ENCODE measurements at regions of chr2 and their contacts with region 1.

Region 1: DNA sequence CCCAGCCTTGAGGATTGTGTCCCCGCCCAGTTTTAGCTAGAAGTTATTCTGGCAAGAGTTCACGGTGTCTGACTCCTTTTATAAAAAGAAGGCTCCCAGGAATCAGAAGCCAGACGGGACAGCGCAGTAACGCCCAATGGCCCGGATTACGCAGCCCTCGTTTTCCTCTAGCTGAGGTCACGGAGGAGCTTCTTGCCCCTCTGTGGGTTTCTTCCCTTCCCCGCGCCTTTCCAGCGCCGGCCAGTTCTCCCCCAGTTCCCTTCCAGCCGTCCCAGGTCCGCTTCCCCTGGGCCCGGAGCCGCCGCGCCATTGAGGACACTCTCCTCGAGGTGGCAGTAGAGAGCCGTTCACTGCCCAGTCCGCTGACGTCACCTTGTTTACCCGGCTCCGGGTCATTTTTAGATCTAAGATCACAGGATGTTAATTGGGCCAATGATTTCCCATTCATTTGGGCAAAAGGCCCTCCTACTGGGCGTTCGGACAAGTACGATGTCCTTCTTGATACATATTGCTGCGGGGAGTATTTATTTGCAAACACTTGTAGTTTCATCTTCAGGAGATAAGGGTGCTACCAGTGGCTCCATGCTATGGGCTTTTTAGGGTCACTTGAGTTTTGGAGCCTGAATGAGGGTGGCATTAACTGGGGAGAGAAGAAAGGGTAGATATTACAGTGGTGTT is 81.5 kb upstream of the PPM1B start:
- DNase-seq: peak; percentile 61
- ATAC-seq: peak; percentile 99
- H3K4me3 ChIP-seq: peak overlapping the region; percentile 44
- H3K27ac ChIP-seq: no peak overlapping the region
- H3K4me1 ChIP-seq: peaks cover 2% of the 10 kb centered on the region; the same call in 1 of the 2 replicates
- H3K27me3 ChIP-seq: peaks cover 4% of the 10 kb centered on the region
- CTCF ChIP-seq: peak; percentile 96
- POLR2A ChIP-seq: no peak
- RAD21 ChIP-seq: peak; percentile 93

Region 2: DNA sequence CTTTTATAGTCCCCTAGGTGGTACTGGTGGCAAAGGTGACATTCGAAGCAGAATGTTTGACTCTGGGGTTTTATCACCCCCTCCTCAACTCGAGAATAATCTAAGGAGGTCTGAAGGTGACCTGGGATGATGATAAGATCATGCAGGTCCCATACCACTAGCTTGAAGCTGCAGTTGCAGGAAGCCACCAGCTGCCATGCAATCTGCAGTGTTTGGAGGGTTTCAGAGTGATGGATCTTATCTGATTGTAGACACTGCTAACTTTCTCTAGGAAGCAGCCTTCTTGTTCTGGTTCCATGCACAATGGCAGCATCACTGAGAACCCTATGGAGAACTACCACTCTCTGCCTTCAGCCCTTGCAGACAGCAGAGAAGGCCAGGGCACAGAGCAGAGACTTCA is 31.9 kb before region 1 on chr2:
- CTCF ChIA-PET with region 1: no interaction called
- POLR2A ChIA-PET with region 1: no interaction called
- dilution Hi-C with region 1: no loop called
- in situ Hi-C with region 1: no loop called
- intact Hi-C with region 1: loop called (anchors 1 kb)
- DNase-seq: no peak
- ATAC-seq: no peak
- H3K4me3 ChIP-seq: no peak overlapping the region
- H3K27ac ChIP-seq: no peak overlapping the region
- H3K4me1 ChIP-seq: no peaks in the 10 kb centered on the region
- H3K27me3 ChIP-seq: peaks cover 20% of the 10 kb centered on the region
- CTCF ChIP-seq: no peak
- POLR2A ChIP-seq: no peak
- RAD21 ChIP-seq: no peak

Region 3: DNA sequence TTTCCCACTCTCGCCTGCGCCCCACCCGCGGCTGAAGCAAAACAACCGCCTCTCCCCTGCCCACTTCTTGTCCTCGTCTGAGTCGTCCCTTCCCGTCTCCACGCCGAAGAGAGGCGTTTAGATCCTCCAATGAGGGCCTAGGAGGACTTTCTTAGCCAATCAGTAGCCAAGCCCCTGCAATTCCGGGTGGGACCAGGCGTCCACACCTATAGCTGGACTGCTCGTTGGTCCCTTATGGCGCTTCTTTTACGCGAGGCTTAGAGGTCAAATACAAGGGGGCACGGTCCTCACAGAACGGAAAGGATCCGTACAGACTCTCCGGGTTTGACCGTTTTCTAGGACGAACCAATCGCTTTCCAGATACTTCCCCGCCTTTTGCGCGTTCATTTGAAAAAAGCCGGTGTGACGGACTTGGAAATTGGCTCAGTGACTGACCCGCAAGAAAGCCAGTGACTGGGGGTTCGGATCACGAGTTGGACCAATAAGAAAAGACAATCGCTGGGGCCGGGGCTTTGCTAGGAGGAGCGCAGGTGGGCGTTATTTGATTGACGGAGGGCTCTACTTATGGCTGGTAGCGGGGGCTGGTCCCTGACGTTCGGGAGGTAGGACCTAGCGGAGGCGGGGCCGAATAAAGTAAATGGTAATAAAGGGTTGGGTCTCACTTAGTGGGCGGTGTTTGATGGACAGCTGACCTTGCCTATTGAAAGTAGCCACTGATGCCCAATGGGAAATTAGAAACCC is 80.9 kb after region 1 on chr2:
- CTCF ChIA-PET with region 1: interaction called, 4 read pairs
- POLR2A ChIA-PET with region 1: interaction called, 7 read pairs
- dilution Hi-C with region 1: no loop called
- in situ Hi-C with region 1: no loop called
- intact Hi-C with region 1: loop called (anchors 1 kb)
- DNase-seq: peak; percentile 100
- ATAC-seq: peak; percentile 84
- H3K4me3 ChIP-seq: peak overlapping the region; percentile 69
- H3K27ac ChIP-seq: peak overlapping the region; percentile 76
- H3K4me1 ChIP-seq: peaks cover 2% of the 10 kb centered on the region; the same call in 1 of the 2 replicates
- H3K27me3 ChIP-seq: no peaks in the 10 kb centered on the region
- CTCF ChIP-seq: no peak
- POLR2A ChIP-seq: peak; percentile 51; the same call in 1 of the 2 replicates
- RAD21 ChIP-seq: no peak

Region 4: DNA sequence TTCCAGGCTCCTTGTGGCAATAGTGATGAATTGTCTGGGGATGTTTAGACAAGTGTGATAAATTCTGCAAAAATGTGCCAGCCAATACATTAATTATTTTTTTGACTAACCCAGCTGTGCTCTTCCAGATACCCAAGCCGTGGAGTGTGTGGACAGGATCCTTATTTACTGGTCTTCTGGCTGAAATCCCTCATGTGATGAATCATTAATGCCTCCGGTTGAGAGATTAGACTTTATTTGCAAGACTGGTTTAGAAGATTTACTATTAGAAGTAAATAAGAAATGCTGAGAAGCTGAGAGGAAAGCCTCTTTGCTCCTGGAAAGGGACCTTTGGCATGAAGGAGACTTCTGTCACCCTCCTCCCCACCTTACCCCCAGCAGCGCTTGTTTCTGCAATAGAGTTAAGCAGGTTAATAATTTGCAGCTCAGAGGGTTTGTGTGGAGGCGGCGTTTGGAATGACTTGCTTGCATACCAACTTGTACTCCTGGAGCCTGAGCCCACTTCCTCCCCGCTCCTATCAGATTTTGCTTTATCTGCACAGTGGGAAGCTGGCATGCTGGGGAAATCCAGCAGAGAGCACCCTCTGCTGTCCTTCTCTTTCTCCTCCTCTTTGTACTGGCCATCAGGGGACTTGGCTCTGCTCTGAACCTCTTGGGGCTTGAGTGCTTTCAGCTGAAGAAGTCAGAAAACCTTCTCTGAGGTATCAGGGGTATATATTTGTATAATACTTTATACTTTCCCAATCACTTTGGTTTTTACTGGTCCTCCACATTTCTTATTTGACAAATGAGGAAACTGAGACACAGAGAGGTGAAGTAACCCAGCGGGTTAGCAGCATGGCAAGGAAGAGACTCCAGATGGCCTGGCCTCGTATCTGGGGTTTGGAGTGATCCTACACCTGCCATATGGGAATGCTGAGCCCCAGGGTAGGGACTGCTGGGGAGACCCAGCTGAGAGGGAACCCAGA is 204.4 kb after region 1 on chr2:
- CTCF ChIA-PET with region 1: interaction called, 4 read pairs
- POLR2A ChIA-PET with region 1: no interaction called
- dilution Hi-C with region 1: no loop called
- in situ Hi-C with region 1: loop called (anchors 25 kb)
- intact Hi-C with region 1: loop called (anchors 1 kb)
- DNase-seq: peak; percentile 75
- ATAC-seq: peak; percentile 95
- H3K4me3 ChIP-seq: no peak overlapping the region
- H3K27ac ChIP-seq: no peak overlapping the region
- H3K4me1 ChIP-seq: peaks cover 7% of the 10 kb centered on the region
- H3K27me3 ChIP-seq: peaks cover 20% of the 10 kb centered on the region
- CTCF ChIP-seq: peak; percentile 74
- POLR2A ChIP-seq: no peak
- RAD21 ChIP-seq: peak; percentile 79

Region 5: GRCh38 chr2:44342854-44343253 is 255.7 kb after region 1 on chr2:
- CTCF ChIA-PET with region 1: no interaction called
- POLR2A ChIA-PET with region 1: interaction called, 14 read pairs
- dilution Hi-C with region 1: no loop called
- in situ Hi-C with region 1: no loop called
- intact Hi-C with region 1: no loop called
- DNase-seq: peak; percentile 7
- ATAC-seq: 0 out of 2 replicates have a peak, but pooled peaks have one; percentile 21
- H3K4me3 ChIP-seq: no peak overlapping the region
- H3K27ac ChIP-seq: no peak overlapping the region
- H3K4me1 ChIP-seq: peaks cover 3% of the 10 kb centered on the region; the same call in 1 of the 2 replicates
- H3K27me3 ChIP-seq: no peaks in the 10 kb centered on the region
- CTCF ChIP-seq: no peak
- POLR2A ChIP-seq: no peak
- RAD21 ChIP-seq: peak; percentile 20; the same call in 1 of the 2 replicates

Region 6: DNA sequence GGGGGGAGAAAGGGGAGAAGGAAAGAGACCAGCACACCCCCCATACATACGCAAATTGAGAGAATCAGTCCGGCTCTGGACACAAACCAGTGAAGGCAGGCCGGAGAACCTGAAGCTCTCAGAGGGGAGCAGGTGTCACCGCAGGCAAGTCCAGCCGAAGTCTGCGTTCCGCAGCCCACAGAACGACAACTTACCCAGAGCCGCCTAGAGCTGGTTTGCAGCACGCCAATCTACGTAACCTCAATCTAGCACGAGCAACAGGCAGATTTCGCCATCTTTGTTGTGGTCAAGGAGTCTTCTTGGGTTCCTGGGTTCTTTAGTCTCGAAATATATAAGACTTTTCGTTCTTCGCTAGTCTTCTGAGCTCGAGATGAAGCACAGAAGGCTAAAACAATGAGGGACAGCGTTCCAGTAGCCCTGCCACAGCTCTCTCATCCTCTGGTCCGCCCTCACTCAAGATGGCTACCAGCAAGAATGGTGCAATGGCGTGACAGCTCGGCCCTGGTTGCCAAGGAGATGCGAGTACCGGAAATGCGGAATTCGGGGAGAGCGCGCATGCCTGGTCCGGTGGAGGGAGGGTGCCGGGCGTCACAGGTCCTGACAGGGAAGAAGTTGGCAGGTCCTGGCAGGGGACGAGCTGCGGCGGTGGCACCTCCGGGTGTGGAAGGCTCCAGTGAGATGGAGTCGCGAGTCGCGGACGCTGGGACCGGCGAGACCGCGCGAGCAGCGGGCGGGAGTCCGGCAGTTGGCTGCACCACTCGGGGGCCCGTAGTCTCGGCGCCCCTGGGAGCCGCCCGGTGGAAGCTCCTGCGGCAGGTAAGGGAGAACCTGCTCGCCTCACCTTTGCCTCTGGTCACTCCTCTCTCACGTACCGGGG is 274.4 kb after region 1 on chr2 and contains the starts of genes CAMKMT and PREPL:
- CTCF ChIA-PET with region 1: no interaction called
- POLR2A ChIA-PET with region 1: no interaction called
- dilution Hi-C with region 1: no loop called
- in situ Hi-C with region 1: no loop called
- intact Hi-C with region 1: loop called (anchors 10 kb)
- DNase-seq: peak; percentile 97
- ATAC-seq: peak; percentile 92
- H3K4me3 ChIP-seq: peak within 1 kb of the TSS; percentile 58
- H3K27ac ChIP-seq: peak within 1 kb of the TSS; percentile 98
- H3K4me1 ChIP-seq: no peaks in the 10 kb centered on the region
- H3K27me3 ChIP-seq: no peaks in the 10 kb centered on the region
- CTCF ChIP-seq: no peak
- POLR2A ChIP-seq: peak; percentile 86
- RAD21 ChIP-seq: no peak
- total RNA-seq, gene CAMKMT: 6.7 and 6.8 TPM in 2 replicates
- total RNA-seq, gene PREPL: 39.6 and 59.2 TPM in 2 replicates

Region 7: DNA sequence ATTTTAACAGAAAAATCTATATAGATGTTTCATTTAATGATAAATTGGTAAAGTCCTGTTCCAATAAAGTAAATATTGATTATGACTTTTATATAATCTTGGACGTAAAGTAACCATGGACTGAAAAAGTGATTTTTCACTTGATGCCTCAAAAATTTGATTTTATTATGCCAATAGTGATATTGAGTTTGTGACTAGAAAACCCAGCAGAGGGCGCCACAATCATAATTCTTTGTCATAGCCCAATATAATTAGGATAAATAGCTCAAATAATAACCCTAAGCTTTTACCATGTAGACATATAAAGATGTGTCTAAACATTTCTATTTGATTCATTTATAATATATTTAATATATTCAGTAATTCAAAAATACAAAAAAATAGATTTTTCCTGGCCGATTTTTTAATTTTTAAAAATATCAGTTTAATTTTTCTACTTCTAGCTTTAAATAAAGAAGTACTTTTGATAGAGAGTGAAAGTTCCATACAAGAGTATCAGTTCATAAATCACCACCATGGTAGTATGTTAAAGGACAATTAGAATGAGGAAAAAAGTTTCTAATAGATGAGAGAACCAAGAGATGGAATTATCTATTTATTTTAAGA is 305.3 kb after region 1 on chr2:
- CTCF ChIA-PET with region 1: no interaction called
- POLR2A ChIA-PET with region 1: no interaction called
- dilution Hi-C with region 1: no loop called
- in situ Hi-C with region 1: no loop called
- intact Hi-C with region 1: loop called (anchors 5 kb)
- DNase-seq: peak; percentile 21
- ATAC-seq: peak; percentile 37; the same call in 1 of the 2 replicates
- H3K4me3 ChIP-seq: no peak overlapping the region
- H3K27ac ChIP-seq: no peak overlapping the region
- H3K4me1 ChIP-seq: no peaks in the 10 kb centered on the region
- H3K27me3 ChIP-seq: no peaks in the 10 kb centered on the region
- CTCF ChIP-seq: peak; percentile 65
- POLR2A ChIP-seq: no peak
- RAD21 ChIP-seq: peak; percentile 55

Region 8: GRCh38 chr2:44596537-44597320 is 509.6 kb after region 1 on chr2:
- CTCF ChIA-PET with region 1: no interaction called
- POLR2A ChIA-PET with region 1: no interaction called
- dilution Hi-C with region 1: no loop called
- in situ Hi-C with region 1: no loop called
- intact Hi-C with region 1: no loop called
- DNase-seq: no peak
- ATAC-seq: no peak
- H3K4me3 ChIP-seq: no peak overlapping the region
- H3K27ac ChIP-seq: no peak overlapping the region
- H3K4me1 ChIP-seq: no peaks in the 10 kb centered on the region
- H3K27me3 ChIP-seq: no peaks in the 10 kb centered on the region
- CTCF ChIP-seq: no peak
- POLR2A ChIP-seq: no peak
- RAD21 ChIP-seq: no peak

Measured in IMR-90 (cell line).